Left ventricle myocardium inferior (tissue), 1 donor: ENCODE measurements at regions of chr2 and their contacts with region 1.

Region 1: GRCh38 chr2:100984892-100985379 is 17.2 kb upstream of the RPL31 start:
- DNase-seq: peak; percentile 73
- H3K4me3 ChIP-seq: no peak overlapping the region
- H3K27ac ChIP-seq: no peak overlapping the region
- H3K4me1 ChIP-seq: peaks cover 8% of the 10 kb centered on the region
- H3K27me3 ChIP-seq: no peaks in the 10 kb centered on the region
- CTCF ChIP-seq: peak; percentile 90

Region 2: DNA sequence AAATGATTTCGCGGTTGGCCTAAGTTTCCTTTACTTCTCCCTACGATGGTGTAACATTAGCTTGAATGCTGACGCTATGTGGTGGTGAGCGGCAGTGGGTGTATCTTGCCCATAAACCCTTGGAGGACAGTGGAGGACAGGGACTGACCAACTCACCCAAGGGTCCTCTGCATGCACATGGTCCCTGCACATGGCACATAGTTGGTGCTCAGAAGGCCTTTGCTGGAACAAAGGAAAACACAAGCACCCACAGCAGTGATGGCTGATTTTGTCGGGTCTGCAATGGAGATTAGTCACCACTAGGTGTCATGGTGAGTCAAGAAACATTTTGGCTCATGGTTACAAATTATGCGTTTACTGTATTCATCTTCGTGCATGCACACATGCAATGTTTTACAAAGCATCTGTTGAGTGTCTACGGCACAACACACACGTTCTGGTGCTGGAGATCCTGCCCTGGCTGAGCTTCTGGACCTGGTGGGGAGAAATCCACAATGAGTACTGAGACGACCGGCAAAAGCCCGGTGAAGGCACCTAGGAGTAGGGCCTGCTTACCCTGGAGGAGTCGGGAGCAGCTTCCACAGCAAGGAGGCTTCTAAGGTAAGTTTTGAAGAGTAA is 378.1 kb before region 1 on chr2:
- intact Hi-C with region 1: loop called (anchors 5 kb)
- DNase-seq: no peak
- H3K4me3 ChIP-seq: no peak overlapping the region
- H3K27ac ChIP-seq: no peak overlapping the region
- H3K4me1 ChIP-seq: peaks cover 13% of the 10 kb centered on the region
- H3K27me3 ChIP-seq: no peaks in the 10 kb centered on the region
- CTCF ChIP-seq: peak; percentile 83

Region 3: GRCh38 chr2:100730346-100730745 is 254.6 kb before region 1 on chr2:
- intact Hi-C with region 1: loop called (anchors 2 kb)
- DNase-seq: peak; percentile 61
- H3K4me3 ChIP-seq: no peak overlapping the region
- H3K27ac ChIP-seq: no peak overlapping the region
- H3K4me1 ChIP-seq: peaks cover 11% of the 10 kb centered on the region
- H3K27me3 ChIP-seq: no peaks in the 10 kb centered on the region
- CTCF ChIP-seq: peak; percentile 77